Motor neuron (in vitro differentiated cells): ENCODE measurements at regions of chr2 and their contacts with region 1.

Region 1: DNA sequence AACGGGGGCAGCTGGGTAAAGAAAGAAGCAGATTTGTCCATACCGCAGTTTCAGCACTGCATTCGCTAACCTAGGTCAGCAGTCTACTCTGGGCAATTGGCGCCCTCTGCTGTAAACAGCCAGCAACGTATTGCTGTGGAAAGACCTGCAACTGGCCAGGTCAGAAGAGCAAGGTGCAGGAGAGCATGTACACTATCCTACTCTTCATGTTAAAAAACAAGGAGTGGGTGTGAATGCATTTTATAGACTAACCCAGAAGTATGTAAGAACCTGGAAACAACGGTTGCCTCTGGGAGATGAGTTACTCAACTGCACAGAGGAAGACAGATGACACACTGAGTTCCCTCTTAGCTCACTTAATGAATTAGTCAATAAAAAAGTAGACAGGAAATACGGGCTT is 6.2 kb downstream of the MRPS5 start:
- ATAC-seq: peak; percentile 87 to 98 (median 95)
- H3K4me3 ChIP-seq: no peak overlapping the region
- H3K27ac ChIP-seq: no peak overlapping the region
- H3K4me1 ChIP-seq: peaks cover 1 to 4% of the 10 kb centered on the region in 2 donors

Region 2: DNA sequence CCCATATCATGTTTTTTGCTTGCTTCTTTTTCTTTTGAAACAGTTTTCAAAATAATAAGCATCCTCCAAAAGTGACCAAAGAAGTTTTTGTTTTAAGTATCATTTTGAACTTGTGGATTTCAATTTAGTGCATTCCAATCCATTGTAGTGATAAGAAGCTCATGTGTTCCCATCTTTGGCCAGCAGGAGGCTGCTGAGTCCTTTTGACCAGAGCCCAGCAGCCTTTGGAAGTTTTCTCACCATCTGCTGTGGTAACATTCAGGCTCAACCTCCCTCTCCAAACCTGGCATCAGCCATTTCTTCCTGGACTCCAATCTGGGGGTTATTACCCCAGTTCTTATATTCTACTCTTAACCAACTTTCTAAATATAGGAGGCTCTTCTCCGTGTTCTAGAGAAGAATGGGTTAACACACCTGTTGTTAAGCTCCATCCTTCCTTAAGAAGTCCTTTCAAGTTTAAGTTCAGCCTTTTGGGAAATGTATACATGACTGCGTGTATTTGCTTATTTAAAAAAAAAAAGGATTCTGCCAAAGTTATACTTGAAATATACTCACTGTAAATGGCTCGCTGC is 128.9 kb before region 1 on chr2:
- in situ Hi-C with region 1: loop called in 1 of 9 experiments (anchors 25 kb)
- ATAC-seq: peak; percentile 62 to 95 (median 79)
- H3K4me3 ChIP-seq: no peak overlapping the region
- H3K27ac ChIP-seq: no peak overlapping the region
- H3K4me1 ChIP-seq: no peaks in the 10 kb centered on the region

Region 3: GRCh38 chr2:95022309-95023221 is 92.9 kb before region 1 on chr2:
- in situ Hi-C with region 1: loop called in 1 of 9 experiments (anchors 25 kb)
- ATAC-seq: peak; percentile 59 to 90 (median 84)
- H3K4me3 ChIP-seq: no peak overlapping the region
- H3K27ac ChIP-seq: no peak overlapping the region
- H3K4me1 ChIP-seq: peaks cover 0 to 17% of the 10 kb centered on the region in 2 donors